ENCODE measurements at regions of chr2 and their contacts with region 1.

Region 1: DNA sequence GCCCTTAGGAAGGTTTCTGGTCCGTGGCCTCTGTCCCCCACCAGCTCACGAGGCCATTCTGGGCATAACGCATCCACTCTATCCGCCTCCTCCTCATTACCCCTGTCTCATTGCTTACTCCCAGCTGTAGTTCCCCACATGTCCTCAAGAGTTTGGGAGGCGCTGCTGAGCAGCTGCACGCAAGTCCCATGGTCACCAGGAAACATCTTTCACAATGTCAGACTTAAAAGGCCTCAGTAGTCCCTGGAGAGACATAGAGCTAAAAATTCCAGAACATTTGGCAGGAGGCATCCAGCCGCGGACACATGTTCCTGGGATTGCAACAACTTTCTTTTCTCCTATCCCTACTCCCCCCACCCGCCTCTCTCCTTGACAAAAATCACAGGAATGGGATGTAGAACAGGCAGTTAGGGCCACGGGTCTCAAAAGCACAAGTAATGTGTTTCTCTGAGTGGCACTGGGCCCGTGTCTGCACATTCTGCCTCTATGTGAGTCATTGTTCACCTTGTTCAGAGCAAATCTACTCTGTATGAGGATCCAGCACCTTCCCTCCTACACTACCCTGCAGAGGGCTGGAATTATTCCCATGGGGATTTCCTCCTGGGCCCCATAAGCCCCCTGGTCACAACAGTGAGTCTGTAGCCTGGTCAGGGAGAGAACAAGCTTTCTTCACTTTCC is 8.1 kb downstream of the LBH start:
- DNase-seq: peak; percentile 87 to 89
- ATAC-seq: peak; percentile 70 to 79
- H3K4me3 ChIP-seq: no peak overlapping the region
- H3K27ac ChIP-seq: peak overlapping the region; percentile 24 to 92; a peak in 4 of 6 replicates
- H3K4me1 ChIP-seq: peaks cover 99% of the 10 kb centered on the region
- CTCF ChIP-seq: peak; percentile 83
- EP300 ChIP-seq: no peak
- POLR2A ChIP-seq: no peak
- RAD21 ChIP-seq: peak; percentile 68 to 76

Region 2: DNA sequence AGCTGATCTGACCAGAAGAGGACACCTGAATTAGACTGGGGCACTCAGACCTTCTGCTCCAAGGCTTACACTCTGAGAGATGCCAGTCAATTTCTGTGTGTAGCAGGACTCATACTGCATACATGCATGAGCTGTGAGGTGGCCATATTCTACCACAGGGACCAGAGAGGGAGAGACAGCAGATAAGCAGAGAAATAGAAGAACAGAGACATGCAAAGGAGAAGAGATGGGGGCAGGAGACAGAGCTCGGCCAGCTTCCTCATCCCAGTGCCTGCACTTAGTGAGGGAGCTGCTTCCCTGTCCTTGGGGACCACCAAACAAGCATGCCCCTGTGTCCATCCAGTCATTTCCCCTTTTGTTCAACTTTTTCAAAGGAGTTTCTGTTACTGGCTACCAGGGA is 244.2 kb before region 1 on chr2:
- CTCF ChIA-PET with region 1: no interaction called
- POLR2A ChIA-PET with region 1: no interaction called
- DNase-seq: no peak
- ATAC-seq: no peak; a peak in 1 of 6 replicates
- H3K4me3 ChIP-seq: no peak overlapping the region
- H3K27ac ChIP-seq: no peak overlapping the region
- H3K4me1 ChIP-seq: no peaks in the 10 kb centered on the region
- CTCF ChIP-seq: no peak
- EP300 ChIP-seq: no peak
- POLR2A ChIP-seq: no peak
- RAD21 ChIP-seq: no peak

Region 3: DNA sequence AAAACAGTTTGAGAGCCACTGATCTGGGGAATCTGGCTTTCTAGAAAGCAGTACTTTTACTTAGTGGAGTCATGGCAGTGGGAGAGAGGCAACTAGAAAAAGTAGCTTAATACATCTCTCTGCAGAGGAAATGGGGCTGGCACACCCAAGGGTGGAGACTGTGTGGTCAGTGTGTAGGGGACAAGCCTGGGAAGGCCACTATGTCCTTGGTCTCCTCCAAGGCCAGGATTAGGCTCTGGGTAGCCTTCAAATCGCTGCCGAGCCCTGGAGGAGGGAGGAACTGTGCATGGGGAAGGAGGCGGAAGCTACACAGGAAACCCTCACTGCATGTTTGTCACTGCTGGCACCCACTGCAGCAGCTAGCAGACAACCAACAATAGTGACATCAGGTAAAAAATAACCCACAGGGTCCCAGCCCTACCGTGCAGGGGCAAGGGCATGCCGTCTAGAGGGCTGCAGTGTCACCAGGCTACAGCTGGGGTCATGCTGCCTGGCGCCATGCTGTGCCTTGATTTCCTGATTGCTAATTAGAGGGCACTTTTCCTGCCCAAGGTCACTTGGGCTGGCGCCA is 26.7 kb after region 1 on chr2:
- CTCF ChIA-PET with region 1: interaction called, 39 read pairs
- POLR2A ChIA-PET with region 1: interaction called, 11 read pairs
- DNase-seq: no peak
- ATAC-seq: peak in 1 of 2 experiments; percentile 5; a peak in 2 of 6 replicates
- H3K4me3 ChIP-seq: no peak overlapping the region
- H3K27ac ChIP-seq: peak overlapping the region; percentile 53 to 68
- H3K4me1 ChIP-seq: peaks cover 33% of the 10 kb centered on the region
- CTCF ChIP-seq: no peak
- EP300 ChIP-seq: no peak
- POLR2A ChIP-seq: no peak
- RAD21 ChIP-seq: no peak

Region 4: GRCh38 chr2:30282086-30282485 is 42.6 kb after region 1 on chr2:
- CTCF ChIA-PET with region 1: interaction called, 11 read pairs
- POLR2A ChIA-PET with region 1: no interaction called
- DNase-seq: no peak
- ATAC-seq: no peak
- H3K4me3 ChIP-seq: no peak overlapping the region
- H3K27ac ChIP-seq: peak overlapping the region in 1 of 2 experiments; percentile 53; a peak in 3 of 6 replicates
- H3K4me1 ChIP-seq: peaks cover 7% of the 10 kb centered on the region; the same call in 2 of the 3 replicates
- CTCF ChIP-seq: no peak
- EP300 ChIP-seq: no peak
- POLR2A ChIP-seq: no peak
- RAD21 ChIP-seq: no peak

Measured in A549 (cell line).